K562 (cell line): ENCODE measurements at regions of chr13 and their contacts with region 1.

Region 1: DNA sequence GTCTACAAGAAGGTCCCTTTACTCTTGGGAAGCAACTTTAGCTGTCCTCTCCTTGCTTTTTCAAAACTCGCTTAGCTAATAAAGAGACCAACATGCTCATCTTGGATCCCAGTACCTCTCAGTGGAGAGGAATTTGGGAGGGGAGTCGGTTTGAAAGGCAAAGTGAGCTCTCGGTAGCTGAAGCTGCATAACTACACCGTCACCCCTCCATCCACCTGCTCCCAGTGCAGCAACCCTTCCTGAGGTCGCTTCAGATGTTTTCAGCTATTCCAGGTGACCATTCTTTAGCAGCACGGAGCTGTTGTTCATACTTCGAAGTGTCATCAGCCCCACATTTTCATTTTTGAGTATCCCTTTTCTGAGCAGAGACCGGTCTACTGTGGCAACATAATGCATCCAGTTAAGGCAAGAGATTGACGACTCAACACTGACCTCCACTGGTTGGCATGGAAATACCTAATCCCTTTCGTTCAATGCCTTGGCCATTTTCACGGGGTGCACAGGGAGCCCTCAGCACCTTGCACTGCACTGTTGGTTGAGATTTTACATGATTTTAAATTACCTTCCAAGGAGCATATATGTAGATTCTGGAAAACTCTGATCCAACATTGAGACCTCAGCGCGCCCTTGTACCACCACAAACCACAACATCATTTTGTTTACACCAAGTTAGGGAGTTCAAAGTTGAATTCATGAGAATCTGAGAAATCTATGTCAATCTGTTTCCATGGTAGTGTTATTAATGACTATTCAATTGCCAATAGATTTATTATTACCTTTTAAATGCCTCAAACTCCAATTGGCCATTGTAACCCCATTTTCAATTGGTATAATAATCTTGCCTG is 42.2 kb downstream of the DLEU7 start:
- DNase-seq: peak; percentile 17 to 71 (median 32)
- ATAC-seq: peak; percentile 94
- H3K4me3 ChIP-seq: no peak overlapping the region
- H3K27ac ChIP-seq: no peak overlapping the region
- H3K4me1 ChIP-seq: no peaks in the 10 kb centered on the region
- H3K27me3 ChIP-seq: no peaks in the 10 kb centered on the region
- CTCF ChIP-seq: peak; percentile 66 to 74 (median 70)
- EP300 ChIP-seq: no peak
- POLR2A ChIP-seq: no peak
- RAD21 ChIP-seq: peak; percentile 85 to 87

Region 2: GRCh38 chr13:49976314-49977258 is 824.7 kb before region 1 on chr13:
- CTCF ChIA-PET with region 1: no interaction called
- POLR2A ChIA-PET with region 1: no interaction called
- in situ Hi-C with region 1: loop called (anchors 10 kb)
- intact Hi-C with region 1: loop called (anchors 5 kb)
- DNase-seq: peak; percentile 59 to 77 (median 62)
- ATAC-seq: peak; percentile 90
- H3K4me3 ChIP-seq: no peak overlapping the region
- H3K27ac ChIP-seq: no peak overlapping the region
- H3K4me1 ChIP-seq: no peaks in the 10 kb centered on the region; a peak in 3 of 5 replicates
- H3K27me3 ChIP-seq: no peaks in the 10 kb centered on the region
- CTCF ChIP-seq: peak; percentile 67 to 82 (median 80)
- EP300 ChIP-seq: no peak
- POLR2A ChIP-seq: no peak
- RAD21 ChIP-seq: peak; percentile 76 to 90

Region 3: GRCh38 chr13:50167224-50167947 is 633.9 kb before region 1 on chr13:
- CTCF ChIA-PET with region 1: no interaction called
- POLR2A ChIA-PET with region 1: no interaction called
- in situ Hi-C with region 1: no loop called
- intact Hi-C with region 1: loop called (anchors 10 kb)
- DNase-seq: peak in 1 of 4 experiments; percentile 9
- ATAC-seq: no peak
- H3K4me3 ChIP-seq: no peak overlapping the region
- H3K27ac ChIP-seq: no peak overlapping the region
- H3K4me1 ChIP-seq: no peaks in the 10 kb centered on the region
- H3K27me3 ChIP-seq: no peaks in the 10 kb centered on the region
- CTCF ChIP-seq: 0 out of 6 replicates have a peak, but pooled peaks of 1 of the 3 experiments have one; percentile 8
- EP300 ChIP-seq: no peak
- POLR2A ChIP-seq: no peak
- RAD21 ChIP-seq: no peak

Region 4: GRCh38 chr13:50387051-50387581 is 414.2 kb before region 1 on chr13:
- CTCF ChIA-PET with region 1: no interaction called
- POLR2A ChIA-PET with region 1: no interaction called
- in situ Hi-C with region 1: no loop called
- intact Hi-C with region 1: loop called (anchors 5 kb)
- DNase-seq: peak; percentile 23 to 65 (median 44)
- ATAC-seq: peak; percentile 97
- H3K4me3 ChIP-seq: no peak overlapping the region
- H3K27ac ChIP-seq: no peak overlapping the region
- H3K4me1 ChIP-seq: peaks cover 0 to 18% of the 10 kb centered on the region in 2 experiments; a peak in 2 of 5 replicates
- H3K27me3 ChIP-seq: no peaks in the 10 kb centered on the region
- CTCF ChIP-seq: peak; percentile 44 to 52 (median 50)
- EP300 ChIP-seq: no peak
- POLR2A ChIP-seq: no peak
- RAD21 ChIP-seq: peak; percentile 61 to 65

Region 5: GRCh38 chr13:51070005-51070649 is 268.8 kb after region 1 on chr13:
- CTCF ChIA-PET with region 1: no interaction called
- POLR2A ChIA-PET with region 1: no interaction called
- in situ Hi-C with region 1: no loop called
- intact Hi-C with region 1: loop called (anchors 10 kb)
- DNase-seq: peak; percentile 48 to 76 (median 58)
- ATAC-seq: peak; percentile 96
- H3K4me3 ChIP-seq: no peak overlapping the region
- H3K27ac ChIP-seq: no peak overlapping the region
- H3K4me1 ChIP-seq: no peaks in the 10 kb centered on the region
- H3K27me3 ChIP-seq: peaks cover 0 to 22% of the 10 kb centered on the region in 2 experiments; a peak in 4 of 5 replicates
- CTCF ChIP-seq: peak; percentile 71 to 88 (median 85)
- EP300 ChIP-seq: no peak
- POLR2A ChIP-seq: no peak
- RAD21 ChIP-seq: peak; percentile 83 to 88

Region 6: DNA sequence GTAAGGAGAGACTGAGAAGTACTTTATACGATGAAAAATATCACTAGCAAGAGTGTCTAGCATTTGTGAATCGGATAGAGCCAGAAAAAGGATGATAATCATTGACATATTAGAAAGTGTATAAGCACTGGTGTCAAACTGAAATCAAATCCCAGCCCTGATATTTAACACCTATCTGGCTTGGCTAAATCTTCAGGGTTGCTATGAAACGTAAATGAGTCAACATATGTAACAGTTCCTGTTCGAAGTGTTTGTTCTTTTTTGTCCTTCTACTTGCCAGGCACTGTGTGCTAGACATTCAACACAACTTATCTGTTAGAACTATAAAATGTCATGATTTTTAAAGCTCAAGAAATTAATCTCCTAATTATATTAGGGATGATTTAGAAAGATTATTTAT is 579.0 kb after region 1 on chr13:
- CTCF ChIA-PET with region 1: no interaction called
- POLR2A ChIA-PET with region 1: no interaction called
- in situ Hi-C with region 1: no loop called
- intact Hi-C with region 1: no loop called
- DNase-seq: no peak
- ATAC-seq: no peak
- H3K4me3 ChIP-seq: no peak overlapping the region
- H3K27ac ChIP-seq: no peak overlapping the region
- H3K4me1 ChIP-seq: no peaks in the 10 kb centered on the region
- H3K27me3 ChIP-seq: no peaks in the 10 kb centered on the region
- CTCF ChIP-seq: no peak
- EP300 ChIP-seq: no peak
- POLR2A ChIP-seq: no peak
- RAD21 ChIP-seq: no peak